ENCODE measurements at regions of chr19 and their contacts with region 1.

Region 1: GRCh38 chr19:49766007-49766937 is 529 bp upstream of the AP2A1 start:
- DNase-seq: peak; percentile 100
- H3K4me3 ChIP-seq: peak overlapping the region; percentile 33 to 74 (median 47)
- H3K4me3 Mint-ChIP-seq: peak overlapping the region; percentile 85 to 95
- H3K27ac ChIP-seq: peak overlapping the region; percentile 89 to 92
- H3K27ac Mint-ChIP-seq: peak overlapping the region; percentile 95 to 99 (median 98)
- H3K4me1 ChIP-seq: peaks cover 29 to 30% of the 10 kb centered on the region in 2 donors
- H3K4me1 Mint-ChIP-seq: peaks cover 42% of the 10 kb centered on the region
- H3K27me3 ChIP-seq: no peaks in the 10 kb centered on the region
- H3K27me3 Mint-ChIP-seq: peaks cover 1 to 2% (median 2%) of the 10 kb centered on the region in 3 donors
- CTCF ChIP-seq: no peak

Region 2: GRCh38 chr19:49690656-49691242 is 75.5 kb before region 1 on chr19 and contains the start of gene CPT1C:
- intact Hi-C with region 1: no loop called
- DNase-seq: no peak
- H3K4me3 ChIP-seq: peak within 1 kb of the TSS in 2 of 3 experiments; percentile 3 to 63
- H3K4me3 Mint-ChIP-seq: peak within 1 kb of the TSS; percentile 72 to 93
- H3K27ac ChIP-seq: no peak within 1 kb of the TSS
- H3K27ac Mint-ChIP-seq: peak within 1 kb of the TSS in 2 of 7 donors; percentile 41 to 51
- H3K4me1 ChIP-seq: peaks cover 29 to 34% of the 10 kb centered on the region in 2 donors
- H3K4me1 Mint-ChIP-seq: peaks cover 37% of the 10 kb centered on the region
- H3K27me3 ChIP-seq: peaks cover 17 to 42% of the 10 kb centered on the region in 2 donors
- H3K27me3 Mint-ChIP-seq: peaks cover 52 to 53% (median 53%) of the 10 kb centered on the region in 3 donors
- CTCF ChIP-seq: no peak
- polyA plus RNA-seq, gene CPT1C: not detected

Region 3: GRCh38 chr19:49746206-49747091 is 19.8 kb before region 1 on chr19:
- intact Hi-C with region 1: no loop called
- DNase-seq: peak; percentile 57 to 77 (median 61)
- H3K4me3 ChIP-seq: no peak overlapping the region
- H3K4me3 Mint-ChIP-seq: peak overlapping the region; percentile 63 to 64
- H3K27ac ChIP-seq: no peak overlapping the region
- H3K27ac Mint-ChIP-seq: peak overlapping the region in 1 of 7 donors; percentile 68
- H3K4me1 ChIP-seq: peaks cover 0 to 7% of the 10 kb centered on the region in 2 donors
- H3K4me1 Mint-ChIP-seq: peaks cover 20% of the 10 kb centered on the region
- H3K27me3 ChIP-seq: no peaks in the 10 kb centered on the region
- H3K27me3 Mint-ChIP-seq: peaks cover 0 to 7% (median 3%) of the 10 kb centered on the region in 3 donors
- CTCF ChIP-seq: peak; percentile 13

Region 4: DNA sequence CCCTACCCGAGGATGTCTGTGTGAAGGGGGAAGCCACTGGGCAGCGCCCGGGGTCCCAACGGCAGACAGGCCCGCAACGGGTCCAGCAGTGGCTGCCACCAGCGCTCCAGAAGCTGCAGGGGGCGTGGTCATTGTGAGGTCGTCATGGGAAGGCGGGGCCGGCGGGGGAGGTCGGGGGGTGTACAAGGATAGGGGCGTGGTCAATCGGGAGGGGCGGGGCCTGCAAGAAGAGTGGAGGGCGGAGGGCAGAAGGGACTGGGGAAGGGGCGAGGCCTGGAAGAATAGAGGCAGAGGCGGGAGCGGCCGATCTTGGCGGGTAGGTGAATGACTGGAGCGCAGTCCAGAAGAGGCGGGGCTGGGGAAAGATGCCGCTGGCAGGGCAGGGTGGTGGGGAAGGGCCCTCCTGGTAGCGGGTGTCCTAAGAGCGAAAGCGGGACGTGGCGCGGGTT is 42.5 kb after region 1 on chr19:
- intact Hi-C with region 1: loop called (anchors 2 to 5 kb)
- DNase-seq: peak; percentile 69 to 86 (median 85)
- H3K4me3 ChIP-seq: peak overlapping the region; percentile 66 to 93 (median 83)
- H3K4me3 Mint-ChIP-seq: peak overlapping the region; percentile 89 to 94
- H3K27ac ChIP-seq: peak overlapping the region; percentile 11 to 60
- H3K27ac Mint-ChIP-seq: peak overlapping the region; percentile 46 to 93 (median 89)
- H3K4me1 ChIP-seq: peaks cover 32 to 47% of the 10 kb centered on the region in 2 donors
- H3K4me1 Mint-ChIP-seq: peaks cover 41% of the 10 kb centered on the region
- H3K27me3 ChIP-seq: no peaks in the 10 kb centered on the region
- H3K27me3 Mint-ChIP-seq: peaks cover 0 to 4% (median 0%) of the 10 kb centered on the region in 3 donors
- CTCF ChIP-seq: no peak

Region 5: GRCh38 chr19:49817964-49818648 is 51.8 kb after region 1 on chr19 and contains the start of gene MED25:
- intact Hi-C with region 1: loop called in 1 of 2 experiments (anchors 2 kb)
- DNase-seq: peak; percentile 81 to 89 (median 83)
- H3K4me3 ChIP-seq: peak within 1 kb of the TSS; percentile 70 to 100 (median 89)
- H3K4me3 Mint-ChIP-seq: peak within 1 kb of the TSS; percentile 96 to 100
- H3K27ac ChIP-seq: peak within 1 kb of the TSS; percentile 75 to 93
- H3K27ac Mint-ChIP-seq: peak within 1 kb of the TSS; percentile 97 to 100 (median 99)
- H3K4me1 ChIP-seq: peaks cover 23 to 27% of the 10 kb centered on the region in 2 donors
- H3K4me1 Mint-ChIP-seq: peaks cover 22% of the 10 kb centered on the region
- H3K27me3 ChIP-seq: no peaks in the 10 kb centered on the region
- H3K27me3 Mint-ChIP-seq: peaks cover 0 to 8% (median 0%) of the 10 kb centered on the region in 3 donors
- CTCF ChIP-seq: peak; percentile 23
- polyA plus RNA-seq, gene MED25: 13.9 to 52.9 (median 18.5) TPM

Measured in CD14-positive monocyte (primary cell).